Cardiac septum (tissue), 1 donor: ENCODE measurements at regions of chr1 and their contacts with region 1.

Region 1: GRCh38 chr1:23664837-23665795 is 26.5 kb upstream of the RPL11 start:
- DNase-seq: no peak

Region 2: DNA sequence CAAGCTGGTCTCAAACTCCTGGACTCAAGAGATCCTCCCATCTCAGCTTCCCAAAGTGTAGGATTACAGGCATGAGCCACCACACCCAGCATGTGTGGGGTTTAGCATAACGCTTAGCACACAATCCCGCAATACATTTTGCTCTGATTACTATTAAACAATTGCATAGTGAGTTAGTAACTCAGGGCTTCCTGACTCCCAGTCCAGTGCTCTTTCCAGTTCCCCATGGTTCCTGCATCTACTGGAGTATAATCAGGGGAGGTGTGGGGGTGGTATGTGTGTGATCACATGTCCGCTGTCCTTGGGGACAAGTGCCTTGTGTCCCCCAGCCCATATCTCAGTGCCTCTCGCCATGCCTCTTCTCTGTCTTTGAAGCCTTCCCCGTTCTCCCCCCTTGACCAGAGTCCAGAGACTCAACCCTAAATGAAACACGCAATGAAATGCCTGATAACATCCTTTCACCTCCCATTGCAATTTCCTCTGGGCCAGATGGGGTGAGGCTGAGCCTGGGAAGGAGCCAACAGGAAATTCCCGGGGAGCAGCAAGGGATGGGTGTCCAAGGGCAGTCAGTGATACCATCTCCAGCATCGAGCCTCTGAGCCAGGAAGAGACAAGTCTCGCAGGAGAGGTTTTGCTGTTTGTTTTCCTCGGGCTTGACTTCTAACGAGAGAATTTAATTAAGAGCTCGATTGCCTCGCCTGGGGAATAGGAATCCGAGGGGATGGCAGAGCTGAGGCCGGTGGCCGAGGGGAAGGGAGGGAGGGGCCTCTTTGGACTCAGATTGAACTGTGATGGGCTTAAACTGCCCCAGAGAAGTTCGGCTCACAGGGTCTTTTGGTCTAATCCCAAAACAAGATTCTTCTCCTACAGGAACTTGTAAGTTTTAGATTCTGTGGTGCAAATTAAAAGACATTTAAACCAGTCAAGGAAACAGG is 440.1 kb before region 1 on chr1:
- intact Hi-C with region 1: loop called (anchors 5 kb)
- DNase-seq: no peak

Region 3: GRCh38 chr1:23825076-23825761 is 160.1 kb after region 1 on chr1 and contains the start of gene HMGCL:
- intact Hi-C with region 1: no loop called
- DNase-seq: peak; percentile 96
- total RNA-seq, gene HMGCL: 27.9 TPM